ENCODE measurements at regions of chr2 and their contacts with region 1.

Region 1: GRCh38 chr2:112884869-112885505 is 26.0 kb upstream of the IL37 start:
- DNase-seq: peak; percentile 84
- ATAC-seq: peak; percentile 76
- H3K4me3 Mint-ChIP-seq: peak overlapping the region; percentile 17
- H3K27ac Mint-ChIP-seq: peak overlapping the region; percentile 48
- H3K4me1 Mint-ChIP-seq: peaks cover 35% of the 10 kb centered on the region
- H3K27me3 Mint-ChIP-seq: no peaks in the 10 kb centered on the region

Region 2: GRCh38 chr2:112737542-112738232 is 147.3 kb before region 1 on chr2:
- CTCF ChIA-PET with region 1: interaction called, 11 read pairs
- DNase-seq: no peak
- ATAC-seq: no peak
- H3K4me3 Mint-ChIP-seq: no peak overlapping the region
- H3K27ac Mint-ChIP-seq: no peak overlapping the region
- H3K4me1 Mint-ChIP-seq: no peaks in the 10 kb centered on the region
- H3K27me3 Mint-ChIP-seq: no peaks in the 10 kb centered on the region

Region 3: DNA sequence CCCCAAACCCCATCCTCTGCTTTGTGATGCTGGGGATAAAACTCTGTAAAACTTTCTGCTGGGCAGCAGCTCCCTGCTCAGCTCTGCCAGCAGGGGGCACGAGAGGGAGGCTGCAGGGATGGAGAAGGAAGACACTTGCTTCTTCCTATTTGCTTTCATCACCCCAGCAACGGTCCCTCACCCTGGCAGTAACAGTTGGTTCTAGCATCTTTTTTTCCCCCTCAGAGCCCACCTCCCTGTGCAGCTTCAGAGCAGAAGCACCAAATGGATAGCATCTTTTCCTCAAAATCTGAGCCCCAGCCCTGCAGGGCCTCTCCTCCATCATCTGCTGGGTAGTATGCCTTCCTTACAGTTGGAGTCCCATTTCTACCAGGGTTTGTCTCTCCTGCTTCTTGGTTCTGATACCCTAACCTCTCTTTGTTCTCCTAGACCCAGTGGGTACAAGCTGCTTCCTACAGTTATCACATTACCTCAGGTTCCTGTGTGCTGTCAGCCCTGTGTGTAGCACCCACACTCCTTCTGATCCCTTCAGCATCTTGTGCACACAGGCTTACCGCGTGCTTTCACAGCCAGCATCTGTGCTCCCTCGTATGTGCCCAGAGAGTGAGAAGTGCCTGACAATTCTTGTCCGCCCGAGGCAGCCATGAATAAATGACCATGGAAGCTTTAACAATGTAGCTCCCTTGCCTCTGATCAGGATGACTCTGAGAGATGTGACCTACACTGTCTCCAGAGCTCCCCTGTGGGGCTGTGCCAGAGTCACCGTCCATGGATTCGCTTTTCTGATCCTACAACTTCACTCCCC is 135.0 kb before region 1 on chr2:
- CTCF ChIA-PET with region 1: interaction called, 172 read pairs
- DNase-seq: peak; percentile 91
- ATAC-seq: peak; percentile 89
- H3K4me3 Mint-ChIP-seq: peak overlapping the region; percentile 1
- H3K27ac Mint-ChIP-seq: peak overlapping the region; percentile 80
- H3K4me1 Mint-ChIP-seq: peaks cover 48% of the 10 kb centered on the region
- H3K27me3 Mint-ChIP-seq: no peaks in the 10 kb centered on the region

Region 4: GRCh38 chr2:112764071-112765044 is 120.6 kb before region 1 on chr2 and contains the start of gene CKAP2L:
- CTCF ChIA-PET with region 1: interaction called, 28 read pairs
- DNase-seq: peak; percentile 99
- ATAC-seq: peak; percentile 97
- H3K4me3 Mint-ChIP-seq: peak within 1 kb of the TSS; percentile 85
- H3K27ac Mint-ChIP-seq: peak within 1 kb of the TSS; percentile 99
- H3K4me1 Mint-ChIP-seq: peaks cover 57% of the 10 kb centered on the region
- H3K27me3 Mint-ChIP-seq: no peaks in the 10 kb centered on the region
- total RNA-seq, gene CKAP2L: 62.2 to 68.8 TPM

Region 5: DNA sequence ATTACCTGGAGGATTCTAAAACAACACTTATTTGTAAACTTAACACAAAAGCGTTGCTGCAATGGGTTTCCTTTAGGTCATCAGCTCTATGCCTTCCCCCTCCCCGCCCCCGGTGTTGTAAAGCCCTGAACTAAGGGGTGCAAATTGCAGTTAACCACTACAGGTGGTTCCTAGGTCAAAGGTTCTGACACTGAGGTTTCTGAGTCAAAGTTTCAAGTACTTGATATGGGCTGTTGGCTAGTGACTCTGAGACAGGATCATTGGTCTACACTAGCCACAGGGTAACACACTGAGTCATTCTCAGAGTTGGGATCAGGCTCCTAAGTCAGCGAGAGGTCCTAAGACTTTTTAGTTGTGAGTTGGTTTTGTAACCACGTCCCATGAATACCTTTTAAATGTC is 63.8 kb before region 1 on chr2:
- CTCF ChIA-PET with region 1: interaction called, 11 read pairs
- DNase-seq: peak; percentile 86
- ATAC-seq: peak; percentile 91
- H3K4me3 Mint-ChIP-seq: no peak overlapping the region
- H3K27ac Mint-ChIP-seq: peak overlapping the region; percentile 79
- H3K4me1 Mint-ChIP-seq: peaks cover 42% of the 10 kb centered on the region
- H3K27me3 Mint-ChIP-seq: no peaks in the 10 kb centered on the region

Region 6: DNA sequence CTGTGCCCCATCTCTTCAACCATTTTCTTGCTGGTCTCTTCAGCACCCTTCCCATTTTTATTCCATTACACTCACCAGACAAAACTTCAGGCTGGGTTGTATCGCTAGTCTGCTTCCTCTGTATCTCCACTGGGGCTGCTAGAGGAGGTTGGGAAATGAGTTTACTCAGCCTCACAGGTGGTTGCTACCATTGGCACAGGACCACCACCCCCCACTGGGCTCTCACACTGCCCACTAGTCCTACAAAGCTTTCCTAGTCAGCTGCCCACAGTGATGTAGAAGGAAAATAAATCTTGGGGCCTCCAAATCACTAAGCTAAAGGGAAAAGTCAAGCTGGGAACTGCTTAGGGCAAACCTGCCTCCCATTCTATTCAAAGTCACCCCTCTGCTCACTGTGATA is 36.2 kb before region 1 on chr2:
- CTCF ChIA-PET with region 1: no interaction called
- DNase-seq: no peak
- ATAC-seq: no peak
- H3K4me3 Mint-ChIP-seq: no peak overlapping the region
- H3K27ac Mint-ChIP-seq: no peak overlapping the region
- H3K4me1 Mint-ChIP-seq: no peaks in the 10 kb centered on the region
- H3K27me3 Mint-ChIP-seq: peaks cover 37% of the 10 kb centered on the region

Region 7: DNA sequence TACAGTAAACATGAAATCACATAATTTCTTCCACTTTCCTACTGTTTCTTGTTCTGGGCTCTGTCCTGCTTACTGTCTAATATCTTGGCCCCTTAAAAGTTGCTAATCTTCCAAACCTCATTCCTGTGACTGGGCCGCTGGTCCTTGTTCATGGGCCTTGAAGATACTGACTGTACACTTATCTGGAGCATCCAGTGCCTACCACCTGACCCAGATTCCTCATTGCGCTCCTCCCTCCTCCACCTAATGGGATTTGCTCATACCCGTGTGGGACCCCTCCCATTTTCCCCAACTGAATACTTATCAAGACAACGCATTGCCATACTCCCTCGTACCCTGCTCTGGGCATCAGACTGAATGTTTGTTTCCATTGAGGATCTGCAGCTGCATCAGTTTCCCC is 19.9 kb after region 1 on chr2:
- CTCF ChIA-PET with region 1: interaction called, 20 read pairs
- DNase-seq: no peak
- ATAC-seq: no peak
- H3K4me3 Mint-ChIP-seq: no peak overlapping the region
- H3K27ac Mint-ChIP-seq: no peak overlapping the region
- H3K4me1 Mint-ChIP-seq: peaks cover 14% of the 10 kb centered on the region
- H3K27me3 Mint-ChIP-seq: peaks cover 3% of the 10 kb centered on the region

Region 8: GRCh38 chr2:112920923-112921532 is 36.0 kb after region 1 on chr2:
- CTCF ChIA-PET with region 1: interaction called, 12 read pairs
- DNase-seq: peak; percentile 80
- ATAC-seq: peak; percentile 82
- H3K4me3 Mint-ChIP-seq: no peak overlapping the region
- H3K27ac Mint-ChIP-seq: peak overlapping the region; percentile 81
- H3K4me1 Mint-ChIP-seq: peaks cover 30% of the 10 kb centered on the region
- H3K27me3 Mint-ChIP-seq: peaks cover 1% of the 10 kb centered on the region

Region 9: DNA sequence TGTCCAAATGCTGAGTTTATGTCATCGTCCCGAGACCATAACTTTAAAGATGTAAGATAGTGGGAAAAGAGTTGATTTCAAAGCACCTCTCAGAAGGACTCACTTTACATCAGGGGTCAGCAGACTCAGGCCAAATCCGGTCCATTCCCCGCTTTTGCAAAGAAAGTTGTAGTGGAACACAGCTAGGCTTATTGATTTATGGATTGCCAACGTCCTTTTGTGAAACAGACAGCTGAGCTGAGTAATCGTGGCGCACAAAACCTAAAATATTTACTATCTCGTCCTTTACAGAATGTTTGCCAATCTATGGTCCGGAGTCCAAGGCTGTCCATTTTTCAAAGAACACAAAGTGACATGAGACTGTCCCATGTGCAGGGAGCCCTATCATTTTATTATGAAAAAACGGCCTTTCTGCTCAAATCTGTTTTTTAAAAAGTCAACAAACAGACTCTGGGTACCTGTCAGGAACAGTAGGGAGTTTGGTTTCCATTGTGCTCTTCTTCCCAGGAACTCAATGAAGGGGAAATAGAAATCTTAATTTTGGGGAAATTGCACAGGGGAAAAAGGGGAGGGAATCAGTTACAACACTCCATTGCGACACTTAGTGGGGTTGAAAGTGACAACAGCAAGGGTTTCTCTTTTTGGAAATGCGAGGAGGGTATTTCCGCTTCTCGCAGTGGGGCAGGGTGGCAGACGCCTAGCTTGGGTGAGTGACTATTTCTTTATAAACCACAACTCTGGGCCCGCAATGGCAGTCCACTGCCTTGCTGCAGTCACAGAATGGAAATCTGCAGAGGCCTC is 242.1 kb after region 1 on chr2 and contains the start of gene IL1RN:
- CTCF ChIA-PET with region 1: no interaction called
- DNase-seq: peak; percentile 38
- ATAC-seq: no peak
- H3K4me3 Mint-ChIP-seq: no peak within 1 kb of the TSS
- H3K27ac Mint-ChIP-seq: no peak within 1 kb of the TSS
- H3K4me1 Mint-ChIP-seq: peaks cover 34% of the 10 kb centered on the region
- H3K27me3 Mint-ChIP-seq: no peaks in the 10 kb centered on the region
- total RNA-seq, gene IL1RN: 1.8 TPM